ENCODE measurements at regions of chr1 and their contacts with region 1.

Region 1: DNA sequence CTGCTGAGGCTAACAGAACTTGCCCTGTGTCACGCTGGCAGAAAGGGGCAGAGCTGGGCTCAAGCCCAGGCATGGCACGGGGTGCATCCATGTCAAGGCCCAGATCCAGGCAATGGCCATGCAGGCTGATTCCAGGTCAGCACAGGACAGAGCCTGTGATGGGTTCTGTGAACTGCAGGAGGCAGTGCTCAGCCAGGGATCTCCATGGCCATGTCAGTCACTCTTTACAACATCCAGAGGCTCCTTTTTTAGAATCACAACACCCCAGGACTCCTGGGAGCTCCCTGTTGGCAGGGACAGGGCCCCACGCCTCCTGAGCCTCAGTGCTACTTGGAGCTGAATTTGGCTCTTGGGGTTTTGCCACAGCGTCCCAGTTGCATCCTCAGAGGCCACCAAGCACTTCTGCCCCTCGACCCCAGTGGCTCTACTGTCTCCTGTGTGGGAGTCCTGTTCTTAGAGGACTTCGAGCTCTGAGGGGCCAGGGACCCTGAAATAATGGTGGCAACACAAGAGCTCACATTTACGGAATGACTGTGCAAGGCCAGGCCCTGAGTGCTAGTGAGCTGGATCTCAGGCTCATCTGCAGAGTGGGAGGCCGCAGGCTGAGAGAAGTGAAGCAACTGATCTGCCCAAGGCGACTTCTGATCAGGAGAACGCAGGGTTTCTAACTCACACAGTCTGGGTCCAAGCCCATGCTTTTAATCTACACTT is 211.5 kb downstream of the TRABD2B start:
- DNase-seq: peak in 4 of 5 donors; percentile 30 to 64 (median 39)
- ATAC-seq: peak; percentile 48 to 80 (median 80)
- H3K4me3 ChIP-seq: no peak overlapping the region
- H3K27ac ChIP-seq: peak overlapping the region in 2 of 12 donors; percentile 5 to 28
- H3K4me1 ChIP-seq: peaks cover 0 to 54% (median 30%) of the 10 kb centered on the region in 12 donors
- H3K27me3 ChIP-seq: no peaks in the 10 kb centered on the region
- CTCF ChIP-seq: peak; percentile 10 to 64 (median 44)
- POLR2A ChIP-seq: no peak

Region 2: GRCh38 chr1:47934243-47934805 is 148.6 kb after region 1 on chr1:
- intact Hi-C with region 1: loop called in 1 of 10 experiments (anchors 5 kb)
- DNase-seq: peak; percentile 42 to 72 (median 70)
- ATAC-seq: peak; percentile 37 to 71 (median 52)
- H3K4me3 ChIP-seq: no peak overlapping the region
- H3K27ac ChIP-seq: peak overlapping the region in 2 of 12 donors; percentile 18 to 45
- H3K4me1 ChIP-seq: peaks cover 0 to 33% (median 5%) of the 10 kb centered on the region in 12 donors
- H3K27me3 ChIP-seq: no peaks in the 10 kb centered on the region
- CTCF ChIP-seq: no peak
- POLR2A ChIP-seq: no peak

Region 3: DNA sequence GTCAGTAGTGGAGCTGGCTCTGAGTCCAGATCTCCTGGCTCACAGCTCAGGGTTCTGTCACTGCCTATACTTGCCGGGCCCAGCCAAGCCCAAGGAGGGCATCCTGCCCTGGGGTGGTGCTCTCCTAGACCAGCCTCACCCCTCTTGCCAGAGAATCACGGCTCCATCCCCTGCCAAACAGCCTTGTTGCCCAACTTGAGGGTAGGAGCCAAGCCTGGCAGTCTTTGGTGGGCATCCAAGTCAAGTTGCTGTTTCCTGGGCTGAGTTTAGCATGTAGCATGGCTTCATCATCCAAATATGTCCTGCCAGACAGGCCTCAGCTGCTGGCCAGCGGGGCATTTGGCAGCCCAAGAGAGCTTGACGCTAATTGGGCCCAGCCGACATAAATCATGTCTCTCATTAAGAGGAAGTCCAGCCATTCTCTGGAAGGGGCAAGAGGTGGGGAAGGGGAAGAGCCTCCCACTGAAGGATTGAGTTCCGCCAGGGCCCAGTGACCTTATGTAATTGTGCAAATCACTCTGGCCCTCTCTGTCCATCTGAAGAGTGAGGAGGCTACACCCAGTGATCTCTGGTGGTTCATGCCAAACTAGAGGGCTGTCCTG is 234.1 kb after region 1 on chr1:
- intact Hi-C with region 1: no loop called
- DNase-seq: peak; percentile 46 to 84 (median 70)
- ATAC-seq: peak; percentile 87 to 94 (median 92)
- H3K4me3 ChIP-seq: no peak overlapping the region
- H3K27ac ChIP-seq: peak overlapping the region in 4 of 12 donors; percentile 15 to 39 (median 20)
- H3K4me1 ChIP-seq: peaks cover 0 to 10% (median 0%) of the 10 kb centered on the region in 12 donors
- H3K27me3 ChIP-seq: peaks cover 0 to 5% (median 0%) of the 10 kb centered on the region in 9 donors
- CTCF ChIP-seq: no peak
- POLR2A ChIP-seq: no peak

Region 4: DNA sequence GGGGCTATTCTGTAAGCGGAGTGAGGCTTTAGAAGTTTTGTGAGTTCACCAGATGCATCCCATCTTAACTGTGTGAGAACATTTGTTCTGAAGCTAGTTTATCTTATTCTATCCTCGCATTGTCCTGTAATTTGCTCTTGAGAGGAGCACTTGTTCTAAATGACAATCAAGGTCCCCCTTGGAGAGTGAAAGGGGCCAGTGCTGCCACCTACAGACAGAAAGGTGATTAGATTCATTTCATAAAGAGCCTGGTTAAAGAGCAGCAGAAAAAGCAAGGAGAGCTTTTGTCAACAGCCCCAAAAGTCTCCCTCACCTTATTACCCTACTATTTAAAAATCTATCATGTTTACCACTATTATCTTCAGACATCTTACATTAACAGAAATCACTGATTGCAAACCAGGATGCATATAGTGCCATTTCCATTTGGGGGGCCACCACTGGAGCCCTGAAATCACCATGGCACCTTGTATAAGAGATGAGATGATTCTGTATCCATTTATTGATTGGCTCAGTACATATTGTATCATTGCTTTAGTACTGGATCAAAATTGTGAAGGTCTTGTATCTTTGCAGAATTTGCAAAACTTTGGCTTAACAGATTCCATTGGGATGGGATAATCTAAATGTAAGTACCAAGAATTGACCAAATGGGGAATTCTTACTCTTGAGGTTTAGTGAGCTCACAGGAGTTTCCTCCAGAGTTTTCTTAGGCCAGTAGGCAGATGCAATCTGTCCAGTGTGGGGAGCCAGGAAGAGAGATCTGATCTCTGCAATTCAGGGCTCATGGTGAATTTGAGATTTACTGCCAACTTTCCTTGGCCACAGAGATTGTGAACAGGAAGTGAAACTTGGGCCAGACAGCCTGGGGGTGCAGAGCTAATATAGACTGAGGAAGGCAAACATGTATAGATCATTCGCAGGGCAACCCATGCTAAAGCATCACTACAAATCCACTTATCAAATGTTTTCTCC is 275.7 kb after region 1 on chr1:
- intact Hi-C with region 1: loop called in 1 of 10 experiments (anchors 5 kb)
- DNase-seq: peak in 4 of 5 donors; percentile 33 to 57 (median 42)
- ATAC-seq: peak; percentile 65 to 86 (median 74)
- H3K4me3 ChIP-seq: no peak overlapping the region
- H3K27ac ChIP-seq: no peak overlapping the region
- H3K4me1 ChIP-seq: peaks cover 0 to 4% (median 0%) of the 10 kb centered on the region in 12 donors
- H3K27me3 ChIP-seq: no peaks in the 10 kb centered on the region
- CTCF ChIP-seq: peak; percentile 50 to 82 (median 74)
- POLR2A ChIP-seq: no peak